ENCODE measurements at regions of chr21 and their contacts with region 1.

Region 1: DNA sequence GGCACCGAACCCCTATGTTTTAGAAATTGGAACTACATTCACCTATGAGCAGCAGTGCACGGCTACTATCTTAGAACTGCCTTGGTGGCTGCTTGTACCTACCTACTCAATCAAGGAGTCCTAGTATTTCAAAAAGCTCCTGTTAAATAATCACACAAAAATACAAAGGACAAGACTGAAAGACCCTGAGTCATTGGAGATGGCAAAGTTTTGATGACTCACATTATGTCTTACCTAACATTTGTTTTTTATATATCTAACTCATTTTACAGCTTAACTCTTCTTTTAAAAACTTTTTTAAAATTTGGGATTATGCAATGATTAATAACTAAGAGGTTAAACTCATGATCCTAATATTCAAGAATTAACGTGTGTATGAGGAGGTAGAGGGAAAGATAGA is 1206.0 kb upstream of the TMPRSS15 start:
- DNase-seq: no peak
- ATAC-seq: no peak
- H3K4me3 ChIP-seq: no peak overlapping the region
- H3K27ac ChIP-seq: no peak overlapping the region
- H3K4me1 ChIP-seq: no peaks in the 10 kb centered on the region
- H3K27me3 ChIP-seq: no peaks in the 10 kb centered on the region
- CTCF ChIP-seq: no peak
- POLR2A ChIP-seq: no peak
- RAD21 ChIP-seq: no peak

Region 2: DNA sequence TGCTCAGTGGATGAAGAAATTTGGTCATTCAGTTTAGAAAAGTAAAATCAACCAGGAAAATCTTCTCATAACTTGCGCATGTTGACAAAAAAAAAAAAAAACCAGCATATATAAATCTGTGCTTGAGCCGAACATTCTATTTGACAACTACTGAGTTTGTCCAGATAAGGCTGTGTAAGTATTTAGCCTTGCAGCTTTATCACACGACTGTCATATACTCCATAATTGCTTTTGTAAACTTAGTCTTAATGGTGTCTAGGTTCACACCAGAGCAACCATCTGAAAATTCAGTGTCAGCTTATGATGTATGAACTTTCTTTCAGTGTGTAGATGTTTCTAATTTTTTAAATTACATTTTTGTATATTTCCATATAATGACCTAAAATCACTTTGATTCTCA is 32.2 kb before region 1 on chr21:
- CTCF ChIA-PET with region 1: no interaction called
- POLR2A ChIA-PET with region 1: no interaction called
- RAD21 ChIA-PET with region 1: no interaction called
- intact Hi-C with region 1: loop called (anchors 1 kb)
- DNase-seq: no peak
- ATAC-seq: no peak
- H3K4me3 ChIP-seq: no peak overlapping the region
- H3K27ac ChIP-seq: no peak overlapping the region
- H3K4me1 ChIP-seq: no peaks in the 10 kb centered on the region
- H3K27me3 ChIP-seq: no peaks in the 10 kb centered on the region
- CTCF ChIP-seq: no peak
- POLR2A ChIP-seq: no peak
- RAD21 ChIP-seq: no peak

Region 3: GRCh38 chr21:19937623-19938022 is 328.0 kb after region 1 on chr21:
- CTCF ChIA-PET with region 1: no interaction called
- POLR2A ChIA-PET with region 1: no interaction called
- RAD21 ChIA-PET with region 1: no interaction called
- intact Hi-C with region 1: no loop called
- DNase-seq: no peak
- ATAC-seq: no peak
- H3K4me3 ChIP-seq: no peak overlapping the region
- H3K27ac ChIP-seq: no peak overlapping the region
- H3K4me1 ChIP-seq: no peaks in the 10 kb centered on the region
- H3K27me3 ChIP-seq: no peaks in the 10 kb centered on the region
- CTCF ChIP-seq: no peak
- POLR2A ChIP-seq: no peak
- RAD21 ChIP-seq: no peak

Region 4: GRCh38 chr21:20943561-20943997 is 1334.0 kb after region 1 on chr21:
- CTCF ChIA-PET with region 1: no interaction called
- POLR2A ChIA-PET with region 1: no interaction called
- RAD21 ChIA-PET with region 1: no interaction called
- intact Hi-C with region 1: no loop called
- DNase-seq: no peak
- ATAC-seq: no peak
- H3K4me3 ChIP-seq: no peak overlapping the region
- H3K27ac ChIP-seq: no peak overlapping the region
- H3K4me1 ChIP-seq: no peaks in the 10 kb centered on the region
- H3K27me3 ChIP-seq: no peaks in the 10 kb centered on the region
- CTCF ChIP-seq: no peak
- POLR2A ChIP-seq: no peak
- RAD21 ChIP-seq: no peak

Measured in HCT116 (cell line).